Activated B cell treated with CpG ODN at 0.5 μM for 24 hours (primary cell): ENCODE measurements at regions of chr11 and their contacts with region 1.

Region 1: DNA sequence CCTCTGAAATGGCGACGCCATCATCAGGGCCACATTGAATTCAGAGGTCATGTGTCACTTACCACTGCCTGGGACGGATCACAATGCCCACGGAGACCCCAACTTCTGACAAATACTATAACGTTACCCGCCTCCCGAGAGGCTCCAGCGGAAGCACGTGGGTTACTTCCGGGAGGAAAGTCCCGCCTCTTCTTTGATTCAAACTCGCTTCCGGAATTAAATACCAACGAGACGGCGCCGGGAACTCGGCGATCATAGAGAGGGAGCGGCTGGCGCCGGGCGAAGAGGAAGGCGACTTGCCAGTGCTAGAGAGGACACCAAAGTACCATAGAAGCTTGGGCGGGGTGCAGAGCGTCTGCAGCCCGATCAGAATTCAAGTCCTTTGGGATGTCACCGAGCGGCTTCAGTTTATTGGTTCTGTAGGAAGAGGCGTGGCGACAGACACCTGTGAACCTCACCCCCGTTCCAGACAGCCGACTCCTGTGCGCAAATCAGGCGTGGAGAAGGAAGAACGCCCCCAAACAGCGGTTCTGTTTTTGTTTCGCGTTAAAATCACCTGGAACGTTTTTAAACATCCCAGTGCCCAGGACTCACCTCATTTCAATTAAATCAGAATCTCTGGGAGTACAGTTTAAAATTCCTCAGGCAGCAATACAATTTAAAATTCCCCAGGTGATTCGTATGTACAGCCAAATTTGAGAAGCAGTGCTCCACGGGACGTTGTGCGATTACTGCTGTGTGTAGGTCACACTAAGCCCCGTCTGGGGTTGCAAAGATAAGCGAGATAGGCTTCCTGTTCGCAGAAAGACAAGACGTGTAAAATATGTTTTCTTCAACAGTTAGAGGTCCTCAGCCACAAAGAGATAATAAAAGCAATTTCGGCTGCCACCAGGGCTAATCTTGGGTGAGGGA is at the start of gene TIMM10:
- DNase-seq: peak; percentile 77
- ATAC-seq: peak; percentile 96
- H3K4me3 Mint-ChIP-seq: peak within 1 kb of the TSS; percentile 94
- H3K27ac Mint-ChIP-seq: peak within 1 kb of the TSS; percentile 90
- H3K4me1 Mint-ChIP-seq: peaks cover 25% of the 10 kb centered on the region
- H3K27me3 Mint-ChIP-seq: no peaks in the 10 kb centered on the region
- CTCF ChIP-seq: no peak
- total RNA-seq, gene TIMM10: 100 and 108 TPM in 2 replicates

Region 2: DNA sequence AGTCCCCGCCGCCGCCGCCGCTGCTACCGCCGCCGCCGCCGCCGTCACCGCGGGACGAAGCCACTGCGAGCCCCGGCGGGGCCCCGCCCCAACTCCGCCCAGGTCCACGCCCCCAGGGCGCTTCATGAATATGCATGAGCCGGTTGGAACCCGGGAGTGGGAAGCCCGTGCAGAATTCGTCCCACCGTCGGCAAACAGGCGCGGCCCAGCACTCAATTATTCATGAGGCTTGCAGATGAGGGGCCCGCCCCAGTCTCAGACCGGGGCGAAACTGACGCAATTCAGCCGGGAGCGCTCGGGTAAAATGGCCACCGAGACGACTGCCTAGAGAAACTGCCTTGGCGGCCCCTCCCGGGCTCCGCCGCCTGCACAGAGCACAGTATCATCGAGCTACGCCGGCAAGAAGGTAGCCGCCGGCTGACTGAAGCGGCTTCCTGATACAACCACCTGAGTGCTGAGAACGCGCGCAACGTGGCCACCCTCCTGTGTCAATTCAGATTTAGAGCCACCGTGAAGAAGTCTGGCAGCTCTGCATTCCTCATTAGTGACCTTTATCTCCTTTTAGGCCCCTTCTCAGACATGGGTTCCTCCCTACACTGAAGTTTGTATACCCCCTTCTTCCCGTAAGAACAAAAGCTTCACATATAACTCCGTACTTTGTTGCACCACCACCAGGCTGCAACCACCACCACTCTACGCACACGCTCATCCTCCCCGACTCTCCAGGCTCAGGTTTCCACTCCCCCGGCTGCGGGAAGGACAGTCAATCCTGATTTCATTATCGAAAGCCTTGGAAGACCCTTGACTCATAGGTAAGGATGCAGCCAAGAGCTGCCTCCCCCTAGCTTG is 205.7 kb before region 1 on chr11 and contains the start of gene TNKS1BP1:
- CTCF ChIA-PET with region 1: no interaction called
- POLR2A ChIA-PET with region 1: interaction called, 8 read pairs
- intact Hi-C with region 1: loop called (anchors 1 kb)
- DNase-seq: peak; percentile 89
- ATAC-seq: peak; percentile 88
- H3K4me3 Mint-ChIP-seq: peak within 1 kb of the TSS; percentile 89
- H3K27ac Mint-ChIP-seq: peak within 1 kb of the TSS; percentile 95
- H3K4me1 Mint-ChIP-seq: peaks cover 34% of the 10 kb centered on the region
- H3K27me3 Mint-ChIP-seq: no peaks in the 10 kb centered on the region
- CTCF ChIP-seq: no peak
- total RNA-seq, gene TNKS1BP1: 13.9 and 14.3 TPM in 2 replicates

Region 3: GRCh38 chr11:57426929-57427726 is 103.7 kb before region 1 on chr11 and contains the start of gene SLC43A3:
- CTCF ChIA-PET with region 1: no interaction called
- POLR2A ChIA-PET with region 1: interaction called, 3 read pairs
- intact Hi-C with region 1: loop called (anchors 1 kb)
- DNase-seq: peak; percentile 72
- ATAC-seq: peak; percentile 69
- H3K4me3 Mint-ChIP-seq: peak within 1 kb of the TSS; percentile 92
- H3K27ac Mint-ChIP-seq: peak within 1 kb of the TSS; percentile 91
- H3K4me1 Mint-ChIP-seq: peaks cover 47% of the 10 kb centered on the region
- H3K27me3 Mint-ChIP-seq: no peaks in the 10 kb centered on the region
- CTCF ChIP-seq: no peak
- total RNA-seq, gene SLC43A3: 213 and 237 TPM in 2 replicates

Region 4: DNA sequence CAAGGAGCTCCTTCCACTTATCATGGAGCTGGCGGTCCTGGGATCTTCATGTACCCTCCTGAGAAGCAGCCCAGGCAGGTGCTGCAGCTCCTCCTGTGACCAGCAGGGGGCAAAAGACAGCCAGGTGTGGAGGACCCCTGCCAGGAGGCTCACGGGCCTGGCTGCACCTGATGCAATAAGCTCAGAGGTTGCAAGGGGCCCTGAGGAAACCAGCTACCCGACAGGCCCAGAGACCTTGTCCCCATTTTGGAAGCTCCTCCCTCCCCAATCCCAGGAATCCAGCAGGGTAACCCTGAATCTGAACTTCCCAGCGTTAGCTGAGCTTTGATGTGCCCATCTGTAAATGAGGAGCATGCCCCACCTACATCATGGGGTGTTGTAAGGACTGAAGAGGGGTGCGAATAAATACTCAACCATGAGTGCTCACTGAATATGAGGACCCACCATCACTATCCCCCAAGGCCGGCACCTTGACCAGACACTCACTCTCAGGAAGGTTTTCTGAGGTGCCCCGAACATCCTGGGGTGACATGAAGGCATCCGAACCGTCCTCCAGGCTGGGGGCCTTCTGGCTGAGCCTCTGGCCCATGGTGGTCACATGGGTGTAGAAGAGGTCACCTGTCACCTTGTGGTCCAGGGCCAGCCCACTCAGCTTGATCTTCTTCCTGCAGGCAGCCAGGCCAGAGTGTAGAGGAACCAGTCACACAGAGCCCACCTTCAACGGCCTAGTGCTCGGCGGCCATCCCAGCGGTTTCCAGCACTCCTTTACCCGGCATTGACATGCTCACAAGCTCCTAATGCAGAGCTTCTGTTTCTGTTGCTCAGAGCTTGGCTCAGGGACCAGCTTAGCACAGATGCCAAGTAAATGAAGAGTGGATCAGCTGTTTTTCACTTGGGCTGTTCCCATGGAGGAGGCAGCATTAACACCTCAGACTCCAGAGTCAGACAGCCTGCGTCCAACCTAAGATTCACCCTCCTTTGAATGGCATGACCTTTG is 37.0 kb before region 1 on chr11:
- CTCF ChIA-PET with region 1: interaction called, 198 read pairs
- POLR2A ChIA-PET with region 1: interaction called, 8 read pairs
- intact Hi-C with region 1: loop called (anchors 1 kb)
- DNase-seq: peak; percentile 64
- ATAC-seq: peak; percentile 96
- H3K4me3 Mint-ChIP-seq: no peak overlapping the region
- H3K27ac Mint-ChIP-seq: peak overlapping the region; percentile 76
- H3K4me1 Mint-ChIP-seq: peaks cover 7% of the 10 kb centered on the region
- H3K27me3 Mint-ChIP-seq: no peaks in the 10 kb centered on the region
- CTCF ChIP-seq: peak; percentile 30

Region 5: DNA sequence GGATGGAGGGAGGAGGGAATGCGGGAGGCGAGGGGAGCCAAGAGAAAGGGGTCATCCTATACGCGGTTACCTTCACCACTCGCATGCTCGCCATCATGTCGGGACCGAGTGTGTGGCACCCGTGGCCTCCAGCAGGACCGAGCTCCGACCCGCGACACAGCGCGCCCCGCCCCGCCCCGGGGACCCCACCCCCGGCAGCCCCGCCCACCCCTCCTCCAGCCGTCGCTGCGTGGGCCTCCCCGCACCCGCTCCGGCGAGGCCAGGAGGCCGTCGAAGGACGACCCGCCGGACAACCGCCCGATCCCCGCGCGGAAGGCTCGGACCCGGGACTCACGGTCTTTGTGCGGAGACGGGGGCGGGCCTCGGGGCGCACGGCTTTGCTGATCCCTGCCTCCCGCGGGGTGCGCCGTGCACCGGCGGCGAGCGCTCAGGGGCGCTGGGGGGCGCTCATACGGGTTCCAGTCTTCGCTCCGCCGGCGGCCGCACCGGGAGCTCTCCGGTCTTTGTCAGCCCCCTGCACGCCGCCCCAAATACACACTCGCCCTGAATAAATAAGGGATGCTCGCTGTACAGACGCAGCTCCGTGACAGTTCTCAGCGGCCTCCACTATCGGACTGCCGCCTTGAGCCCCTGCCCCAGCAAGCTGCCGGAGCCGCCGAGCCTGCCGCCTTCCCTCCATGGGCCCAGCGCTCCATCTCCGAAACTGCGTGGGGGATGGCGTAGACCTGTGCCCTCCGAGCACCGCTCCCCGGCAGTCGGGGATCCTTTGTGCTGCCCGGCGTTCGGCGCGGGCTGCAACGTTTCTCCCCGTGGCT is 36.9 kb after region 1 on chr11 and contains the start of gene UBE2L6:
- CTCF ChIA-PET with region 1: interaction called, 13 read pairs
- POLR2A ChIA-PET with region 1: interaction called, 8 read pairs
- intact Hi-C with region 1: loop called (anchors 1 kb)
- DNase-seq: peak; percentile 80
- ATAC-seq: peak; percentile 70
- H3K4me3 Mint-ChIP-seq: peak within 1 kb of the TSS; percentile 99
- H3K27ac Mint-ChIP-seq: peak within 1 kb of the TSS; percentile 97
- H3K4me1 Mint-ChIP-seq: peaks cover 40% of the 10 kb centered on the region
- H3K27me3 Mint-ChIP-seq: no peaks in the 10 kb centered on the region
- CTCF ChIP-seq: peak; percentile 41
- total RNA-seq, gene UBE2L6: 63.4 and 69.2 TPM in 2 replicates

Region 6: GRCh38 chr11:57604296-57605027 is 73.6 kb after region 1 on chr11:
- CTCF ChIA-PET with region 1: no interaction called
- POLR2A ChIA-PET with region 1: no interaction called
- intact Hi-C with region 1: no loop called
- DNase-seq: no peak
- ATAC-seq: no peak
- H3K4me3 Mint-ChIP-seq: no peak overlapping the region
- H3K27ac Mint-ChIP-seq: no peak overlapping the region
- H3K4me1 Mint-ChIP-seq: no peaks in the 10 kb centered on the region
- H3K27me3 Mint-ChIP-seq: peaks cover 14% of the 10 kb centered on the region
- CTCF ChIP-seq: no peak

Region 7: DNA sequence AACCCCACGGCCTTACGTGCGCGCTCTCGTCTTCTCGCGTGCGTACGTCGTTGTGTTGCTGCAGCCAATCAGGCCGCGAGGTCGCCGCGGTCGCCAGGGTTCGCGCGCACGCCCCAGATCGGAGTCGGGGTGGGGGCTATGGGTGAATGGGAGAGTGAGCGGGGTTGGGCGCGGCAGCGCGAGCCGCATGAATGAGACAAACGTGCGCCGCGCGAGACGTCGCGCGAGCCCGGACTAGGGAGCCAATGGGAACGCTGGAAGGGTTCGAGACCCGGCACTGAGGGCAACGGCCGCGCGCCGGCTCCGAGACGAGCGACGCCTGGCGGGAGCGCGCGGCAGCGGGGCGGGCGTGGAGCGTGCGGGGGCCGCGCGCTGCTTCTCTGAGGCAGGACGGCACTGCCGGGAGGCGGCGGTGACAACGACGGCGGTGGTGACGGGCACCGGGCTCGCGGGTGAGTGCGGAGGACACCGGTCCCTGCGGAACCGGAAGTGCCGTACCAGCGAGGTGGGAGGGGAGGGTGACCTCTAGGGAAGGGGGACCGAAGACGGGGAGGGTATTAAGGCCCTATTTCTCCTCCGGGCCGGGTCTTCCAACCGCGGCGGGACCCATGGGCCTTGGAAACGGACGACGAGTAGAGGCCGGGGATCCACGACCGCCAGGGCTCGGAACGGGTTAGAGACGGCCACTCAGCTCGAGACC is 137.0 kb after region 1 on chr11 and contains the start of gene ZDHHC5:
- CTCF ChIA-PET with region 1: no interaction called
- POLR2A ChIA-PET with region 1: interaction called, 4 read pairs
- intact Hi-C with region 1: loop called (anchors 1 kb)
- DNase-seq: peak; percentile 97
- ATAC-seq: peak; percentile 80
- H3K4me3 Mint-ChIP-seq: peak within 1 kb of the TSS; percentile 89
- H3K27ac Mint-ChIP-seq: peak within 1 kb of the TSS; percentile 99
- H3K4me1 Mint-ChIP-seq: peaks cover 49% of the 10 kb centered on the region
- H3K27me3 Mint-ChIP-seq: no peaks in the 10 kb centered on the region
- CTCF ChIP-seq: no peak
- total RNA-seq, gene ZDHHC5: 50.9 and 60.7 TPM in 2 replicates